Endothelial cell of umbilical vein (primary cell): ENCODE measurements at regions of chr2 and their contacts with region 1.

Region 1: DNA sequence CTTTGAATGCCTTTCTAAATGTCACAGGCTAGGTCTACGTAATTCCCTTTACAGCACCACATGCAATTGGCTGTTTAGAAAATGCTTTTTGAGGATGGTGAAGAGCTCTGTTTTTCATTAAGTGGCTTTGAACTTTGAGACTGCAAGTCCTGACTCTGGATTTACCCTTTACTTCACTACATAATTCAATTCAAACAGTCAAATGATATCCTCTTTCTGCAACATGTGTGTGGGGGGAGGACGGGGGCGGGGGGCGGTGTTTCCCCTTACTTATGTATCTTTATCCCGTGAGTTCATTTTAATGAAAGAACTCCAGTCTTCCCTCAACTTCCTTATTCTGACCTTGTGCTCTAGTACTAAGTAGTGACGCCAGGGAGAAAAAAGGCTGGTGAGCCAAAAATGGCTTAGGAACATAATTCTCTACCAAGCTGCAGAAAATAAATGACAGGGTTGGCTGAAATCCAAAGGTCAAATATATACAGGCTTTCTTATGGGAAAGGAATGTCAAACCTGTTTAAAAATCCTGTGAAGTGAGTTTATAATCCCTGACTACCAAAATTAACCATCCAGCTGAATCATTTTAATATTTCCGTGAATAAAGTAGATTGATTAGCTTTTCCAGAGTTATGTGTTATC is 119.6 kb downstream of the SLC8A1 start:
- DNase-seq: peak; percentile 95
- H3K4me3 ChIP-seq: no peak overlapping the region
- H3K27ac ChIP-seq: peak overlapping the region; percentile 10
- H3K4me1 ChIP-seq: peaks cover 24% of the 10 kb centered on the region
- H3K27me3 ChIP-seq: no peaks in the 10 kb centered on the region
- CTCF ChIP-seq: no peak
- POLR2A ChIP-seq: no peak

Region 2: GRCh38 chr2:40401896-40402295 is 69.6 kb after region 1 on chr2:
- CTCF ChIA-PET with region 1: no interaction called
- POLR2A ChIA-PET with region 1: interaction called, 3 read pairs
- dilution Hi-C with region 1: no loop called
- intact Hi-C with region 1: loop called (anchors 1 kb)
- DNase-seq: peak; percentile 67
- H3K4me3 ChIP-seq: no peak overlapping the region
- H3K27ac ChIP-seq: peak overlapping the region; percentile 59
- H3K4me1 ChIP-seq: peaks cover 26% of the 10 kb centered on the region
- H3K27me3 ChIP-seq: no peaks in the 10 kb centered on the region
- CTCF ChIP-seq: no peak
- POLR2A ChIP-seq: peak; percentile 18

Region 3: DNA sequence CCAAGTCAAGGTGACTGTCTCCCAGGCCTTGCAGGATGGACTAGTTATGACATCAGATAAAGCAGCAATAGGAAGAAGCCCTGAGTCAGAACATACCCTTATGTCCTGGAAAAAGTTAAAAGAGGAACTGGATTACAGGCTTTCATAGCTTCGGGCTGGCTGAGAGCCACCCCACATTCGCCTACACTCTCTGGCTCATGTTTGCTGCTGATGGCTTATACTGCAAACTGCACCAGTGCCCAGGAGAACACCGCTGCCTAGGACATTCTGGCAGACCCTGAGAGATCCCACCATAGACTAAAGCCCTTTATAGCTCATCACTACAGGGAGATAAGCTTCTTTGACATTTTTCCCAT is 99.3 kb after region 1 on chr2:
- CTCF ChIA-PET with region 1: interaction called, 4 read pairs
- POLR2A ChIA-PET with region 1: no interaction called
- dilution Hi-C with region 1: no loop called
- intact Hi-C with region 1: loop called (anchors 1 kb)
- DNase-seq: no peak
- H3K4me3 ChIP-seq: no peak overlapping the region
- H3K27ac ChIP-seq: no peak overlapping the region
- H3K4me1 ChIP-seq: peaks cover 31% of the 10 kb centered on the region
- H3K27me3 ChIP-seq: no peaks in the 10 kb centered on the region
- CTCF ChIP-seq: no peak
- POLR2A ChIP-seq: no peak

Region 4: GRCh38 chr2:40455661-40456060 is 123.4 kb after region 1 on chr2:
- CTCF ChIA-PET with region 1: interaction called, 11 read pairs
- POLR2A ChIA-PET with region 1: no interaction called
- dilution Hi-C with region 1: no loop called
- intact Hi-C with region 1: loop called (anchors 1 kb)
- DNase-seq: no peak
- H3K4me3 ChIP-seq: no peak overlapping the region
- H3K27ac ChIP-seq: no peak overlapping the region
- H3K4me1 ChIP-seq: peaks cover 8% of the 10 kb centered on the region
- H3K27me3 ChIP-seq: no peaks in the 10 kb centered on the region
- CTCF ChIP-seq: no peak
- POLR2A ChIP-seq: no peak

Region 5: GRCh38 chr2:40511661-40512213 is 179.4 kb after region 1 on chr2:
- CTCF ChIA-PET with region 1: no interaction called
- POLR2A ChIA-PET with region 1: no interaction called
- dilution Hi-C with region 1: no loop called
- intact Hi-C with region 1: loop called (anchors 1 kb)
- DNase-seq: peak; percentile 87
- H3K4me3 ChIP-seq: peak overlapping the region in 1 of 3 experiments; percentile 34
- H3K27ac ChIP-seq: peak overlapping the region; percentile 68
- H3K4me1 ChIP-seq: peaks cover 16% of the 10 kb centered on the region
- H3K27me3 ChIP-seq: no peaks in the 10 kb centered on the region
- CTCF ChIP-seq: no peak
- POLR2A ChIP-seq: no peak